ENCODE measurements at regions of chr7 and their contacts with region 1.

Region 1: DNA sequence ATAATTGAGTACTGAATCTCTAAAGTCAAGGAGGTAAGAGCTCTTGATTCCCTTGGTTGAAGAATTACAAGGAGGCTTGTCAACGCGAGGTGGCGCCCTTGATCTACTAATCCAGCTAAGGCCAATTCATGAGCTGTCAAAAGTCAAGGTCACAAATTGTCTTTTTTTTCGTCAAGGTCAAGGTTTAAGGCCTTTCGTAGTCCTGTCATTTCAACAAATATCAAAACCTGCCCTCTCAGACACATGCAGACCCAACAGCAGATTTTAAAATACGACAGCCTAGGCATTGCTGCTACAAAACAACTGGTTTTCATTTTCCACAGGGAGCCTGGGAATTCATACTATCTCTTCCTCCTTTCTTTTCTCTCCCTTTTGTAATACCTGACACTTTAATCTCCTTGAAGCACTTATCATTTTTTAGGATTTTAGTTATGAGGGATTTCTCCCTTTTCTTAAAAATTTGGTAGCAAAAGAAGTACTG is 3.6 kb downstream of the HOXA13 start:
- DNase-seq: peak; percentile 88
- ATAC-seq: no peak
- H3K4me3 Mint-ChIP-seq: no peak overlapping the region
- H3K27ac Mint-ChIP-seq: no peak overlapping the region
- H3K4me1 Mint-ChIP-seq: peaks cover 18% of the 10 kb centered on the region
- H3K27me3 Mint-ChIP-seq: peaks cover 87% of the 10 kb centered on the region

Region 2: GRCh38 chr7:27179503-27180430 is 16.6 kb before region 1 on chr7:
- CTCF ChIA-PET with region 1: interaction called, 13 read pairs
- DNase-seq: peak; percentile 58
- ATAC-seq: peak; percentile 68
- H3K4me3 Mint-ChIP-seq: no peak overlapping the region
- H3K27ac Mint-ChIP-seq: no peak overlapping the region
- H3K4me1 Mint-ChIP-seq: peaks cover 6% of the 10 kb centered on the region
- H3K27me3 Mint-ChIP-seq: peaks cover 82% of the 10 kb centered on the region

Region 3: GRCh38 chr7:27185013-27185855 is 11.1 kb before region 1 on chr7 and contains the start of gene HOXA11:
- CTCF ChIA-PET with region 1: interaction called, 13 read pairs
- DNase-seq: no peak
- ATAC-seq: no peak
- H3K4me3 Mint-ChIP-seq: peak within 1 kb of the TSS; percentile 60
- H3K27ac Mint-ChIP-seq: peak within 1 kb of the TSS; percentile 69
- H3K4me1 Mint-ChIP-seq: peaks cover 28% of the 10 kb centered on the region
- H3K27me3 Mint-ChIP-seq: peaks cover 90% of the 10 kb centered on the region
- total RNA-seq, gene HOXA11: not detected

Region 4: DNA sequence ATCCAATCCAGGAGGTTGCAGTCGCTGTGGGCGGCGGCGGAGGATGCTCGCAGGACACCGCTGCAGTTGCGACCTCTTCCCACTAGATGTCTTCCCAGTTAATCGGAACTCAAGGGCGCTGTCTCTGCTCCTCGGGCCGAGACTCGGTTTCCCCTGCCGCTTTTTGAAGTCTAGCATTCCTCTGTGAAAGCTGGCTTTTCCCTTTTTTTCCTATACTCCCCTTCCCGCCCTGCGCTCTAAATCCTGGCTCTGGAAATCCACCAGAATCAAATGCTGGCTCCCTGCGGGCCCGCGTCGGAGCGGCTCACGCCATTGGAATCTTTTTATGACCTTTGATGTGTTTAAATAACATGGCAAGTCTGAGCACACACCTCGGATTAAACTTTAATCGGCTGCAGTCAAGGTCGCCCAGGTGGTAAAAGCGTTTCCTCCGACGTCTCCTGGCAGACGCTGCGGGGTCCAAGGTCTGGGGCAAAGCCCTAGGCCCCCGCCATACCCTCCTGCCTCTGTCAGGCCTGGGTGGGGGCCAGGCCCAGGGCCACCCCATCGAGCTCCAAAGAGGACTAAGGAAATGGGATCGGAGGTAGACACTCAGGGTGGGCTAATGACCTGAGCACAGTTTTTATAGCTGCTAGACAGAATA is 14.2 kb after region 1 on chr7:
- CTCF ChIA-PET with region 1: interaction called, 12 read pairs
- DNase-seq: peak; percentile 54
- ATAC-seq: peak; percentile 65
- H3K4me3 Mint-ChIP-seq: no peak overlapping the region
- H3K27ac Mint-ChIP-seq: no peak overlapping the region
- H3K4me1 Mint-ChIP-seq: peaks cover 7% of the 10 kb centered on the region
- H3K27me3 Mint-ChIP-seq: peaks cover 98% of the 10 kb centered on the region

Region 5: DNA sequence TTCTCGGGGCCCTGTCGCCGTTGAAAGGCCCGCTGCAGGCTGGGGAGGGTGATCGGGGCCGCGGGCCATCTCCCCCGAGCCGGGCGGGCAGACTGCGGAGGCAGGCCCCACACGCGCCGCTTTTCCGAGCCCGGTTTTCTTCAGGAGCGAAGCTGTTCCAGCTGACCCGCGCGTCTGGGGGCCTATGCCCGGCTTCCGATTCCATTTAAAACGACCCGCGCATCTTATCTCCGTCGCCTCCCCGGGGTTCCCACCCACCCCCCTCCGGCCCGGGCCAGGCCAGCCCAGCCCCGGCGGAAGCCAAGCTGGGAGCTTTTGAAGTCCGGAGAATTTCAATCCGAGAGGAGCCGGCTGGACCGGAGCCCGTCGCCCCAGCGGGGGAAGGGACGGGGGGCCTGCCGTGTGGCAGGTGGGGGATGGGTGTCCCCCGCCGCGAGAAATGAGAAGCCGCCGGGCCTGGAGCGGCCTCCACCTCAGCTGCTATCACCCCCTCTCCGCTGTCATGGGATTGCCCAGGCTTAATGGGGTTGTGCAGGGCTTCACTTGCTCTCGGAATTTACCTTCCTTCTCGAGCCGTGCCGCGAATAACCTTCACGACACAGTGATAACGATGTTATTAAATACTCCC is 43.2 kb after region 1 on chr7:
- CTCF ChIA-PET with region 1: interaction called, 15 read pairs
- DNase-seq: no peak
- ATAC-seq: no peak
- H3K4me3 Mint-ChIP-seq: no peak overlapping the region
- H3K27ac Mint-ChIP-seq: no peak overlapping the region
- H3K4me1 Mint-ChIP-seq: peaks cover 13% of the 10 kb centered on the region
- H3K27me3 Mint-ChIP-seq: peaks cover 89% of the 10 kb centered on the region

Region 6: DNA sequence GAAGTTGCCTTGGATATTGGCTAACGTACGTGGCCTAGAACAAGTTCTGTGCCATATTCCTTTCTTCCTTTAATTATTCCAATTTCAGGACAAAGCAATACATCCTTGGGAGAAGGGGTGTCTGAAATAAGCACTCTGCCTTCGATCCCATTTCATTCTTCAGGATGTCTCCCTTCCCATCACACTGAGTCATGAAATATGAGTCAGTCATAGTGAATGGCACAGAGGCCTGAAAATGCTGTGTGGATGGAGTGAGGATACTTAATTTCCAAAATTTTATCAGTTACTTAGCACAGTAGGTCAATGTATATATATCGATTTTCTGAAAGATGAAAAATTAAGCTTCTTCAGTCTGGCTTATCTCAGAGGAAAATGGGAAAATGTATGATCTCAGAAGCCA is 65.8 kb after region 1 on chr7:
- CTCF ChIA-PET with region 1: no interaction called
- DNase-seq: no peak
- ATAC-seq: no peak
- H3K4me3 Mint-ChIP-seq: no peak overlapping the region
- H3K27ac Mint-ChIP-seq: no peak overlapping the region
- H3K4me1 Mint-ChIP-seq: no peaks in the 10 kb centered on the region
- H3K27me3 Mint-ChIP-seq: peaks cover 22% of the 10 kb centered on the region

Region 7: DNA sequence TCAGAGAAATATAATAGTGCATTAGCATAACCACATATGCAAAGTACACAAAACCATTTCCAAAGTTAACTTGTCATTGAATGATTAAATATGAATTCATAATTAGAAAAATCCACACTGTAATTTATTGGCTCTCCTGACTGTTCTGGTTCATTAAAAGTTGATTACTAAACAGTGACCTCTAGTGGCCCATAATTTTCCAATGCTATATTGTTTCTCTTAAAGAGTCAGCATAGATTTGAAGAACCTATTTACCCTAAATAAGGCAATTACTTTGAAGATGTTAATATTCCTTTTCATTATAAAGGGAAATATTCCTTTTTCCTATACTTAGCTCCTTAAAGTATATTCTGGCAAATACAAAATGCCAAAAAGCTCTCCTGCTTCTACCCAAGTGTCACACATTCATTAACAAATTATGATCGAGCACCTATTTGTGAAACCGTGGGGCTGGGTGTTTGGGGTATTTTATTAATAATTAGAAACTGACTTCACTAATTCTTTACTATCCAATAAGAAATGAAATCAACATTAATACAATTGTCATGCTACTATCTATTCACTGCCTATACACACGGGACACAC is 380.1 kb after region 1 on chr7:
- CTCF ChIA-PET with region 1: interaction called, 14 read pairs
- DNase-seq: no peak
- ATAC-seq: no peak
- H3K4me3 Mint-ChIP-seq: no peak overlapping the region
- H3K27ac Mint-ChIP-seq: no peak overlapping the region
- H3K4me1 Mint-ChIP-seq: no peaks in the 10 kb centered on the region
- H3K27me3 Mint-ChIP-seq: no peaks in the 10 kb centered on the region

Region 8: DNA sequence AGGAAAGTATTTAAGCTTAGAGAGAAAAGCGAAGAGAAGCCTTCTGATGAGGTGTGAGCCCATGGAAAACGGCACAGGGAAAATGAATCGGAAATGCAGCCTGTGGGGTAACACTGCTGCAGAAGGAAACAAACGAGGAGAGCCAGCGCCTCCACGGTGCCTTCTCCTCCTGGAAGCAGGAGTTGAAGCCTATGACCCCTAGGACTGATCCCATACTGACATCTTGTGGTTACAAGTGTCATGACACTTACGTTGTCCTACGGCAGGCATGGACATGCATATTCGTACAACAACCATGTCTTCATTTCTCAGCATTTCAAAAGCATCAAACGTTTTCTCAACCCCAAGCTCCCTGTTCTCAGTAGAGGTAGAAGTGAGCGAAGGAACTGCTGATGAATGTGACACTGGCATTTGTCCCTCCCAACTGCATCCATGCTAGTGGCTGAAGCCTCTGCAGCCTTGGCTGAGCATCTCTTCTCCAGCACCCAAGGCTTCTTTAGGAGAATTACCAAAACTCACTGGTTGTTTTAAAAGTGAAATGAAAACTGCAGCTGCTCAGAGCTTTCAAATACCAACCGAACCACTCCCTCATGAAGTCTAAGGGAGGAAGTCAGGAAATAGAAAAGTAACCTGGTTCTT is 824.1 kb after region 1 on chr7:
- CTCF ChIA-PET with region 1: interaction called, 11 read pairs
- DNase-seq: peak; percentile 55
- ATAC-seq: peak; percentile 80
- H3K4me3 Mint-ChIP-seq: no peak overlapping the region
- H3K27ac Mint-ChIP-seq: no peak overlapping the region
- H3K4me1 Mint-ChIP-seq: peaks cover 6% of the 10 kb centered on the region
- H3K27me3 Mint-ChIP-seq: no peaks in the 10 kb centered on the region

Measured in activated CD8-positive, alpha-beta memory T cell treated with anti-CD3 and anti-CD28 coated beads, Interleukin-2, amount 10 ng/mL, durations not matched to agents 7 days and 5 days (primary cell).